ENCODE measurements at regions of chr21 and their contacts with region 1.

Region 1: DNA sequence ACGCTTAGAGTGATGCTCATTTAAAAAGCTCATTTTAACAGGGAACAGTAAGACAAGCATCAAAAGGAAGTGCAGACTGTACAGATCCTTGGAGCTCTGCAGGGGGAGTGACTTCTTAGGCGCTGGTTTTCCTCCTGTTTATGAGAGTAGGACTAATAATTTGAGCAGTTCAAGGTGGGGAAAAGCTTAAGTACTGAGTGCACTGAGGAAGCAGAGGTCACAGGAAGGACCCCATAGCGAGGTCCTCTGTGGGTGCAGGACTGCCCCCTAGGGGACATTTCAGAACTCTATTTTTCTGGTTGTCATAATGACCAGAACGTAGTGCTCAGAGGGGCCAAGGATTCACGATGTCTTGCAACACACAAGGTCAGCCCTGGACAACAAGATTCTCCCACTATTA is 112.1 kb downstream of the HLCS start:
- DNase-seq: peak in 3 of 9 experiments; percentile 14 to 50 (median 38)
- ATAC-seq: no peak
- H3K4me3 ChIP-seq: no peak overlapping the region
- H3K4me3 Mint-ChIP-seq: no peak overlapping the region
- H3K27ac ChIP-seq: no peak overlapping the region
- H3K27ac Mint-ChIP-seq: no peak overlapping the region
- H3K4me1 ChIP-seq: no peaks in the 10 kb centered on the region
- H3K4me1 Mint-ChIP-seq: peaks cover 2% of the 10 kb centered on the region
- H3K27me3 ChIP-seq: no peaks in the 10 kb centered on the region
- H3K27me3 Mint-ChIP-seq: no peaks in the 10 kb centered on the region
- CTCF ChIP-seq: peak; percentile 46

Region 2: DNA sequence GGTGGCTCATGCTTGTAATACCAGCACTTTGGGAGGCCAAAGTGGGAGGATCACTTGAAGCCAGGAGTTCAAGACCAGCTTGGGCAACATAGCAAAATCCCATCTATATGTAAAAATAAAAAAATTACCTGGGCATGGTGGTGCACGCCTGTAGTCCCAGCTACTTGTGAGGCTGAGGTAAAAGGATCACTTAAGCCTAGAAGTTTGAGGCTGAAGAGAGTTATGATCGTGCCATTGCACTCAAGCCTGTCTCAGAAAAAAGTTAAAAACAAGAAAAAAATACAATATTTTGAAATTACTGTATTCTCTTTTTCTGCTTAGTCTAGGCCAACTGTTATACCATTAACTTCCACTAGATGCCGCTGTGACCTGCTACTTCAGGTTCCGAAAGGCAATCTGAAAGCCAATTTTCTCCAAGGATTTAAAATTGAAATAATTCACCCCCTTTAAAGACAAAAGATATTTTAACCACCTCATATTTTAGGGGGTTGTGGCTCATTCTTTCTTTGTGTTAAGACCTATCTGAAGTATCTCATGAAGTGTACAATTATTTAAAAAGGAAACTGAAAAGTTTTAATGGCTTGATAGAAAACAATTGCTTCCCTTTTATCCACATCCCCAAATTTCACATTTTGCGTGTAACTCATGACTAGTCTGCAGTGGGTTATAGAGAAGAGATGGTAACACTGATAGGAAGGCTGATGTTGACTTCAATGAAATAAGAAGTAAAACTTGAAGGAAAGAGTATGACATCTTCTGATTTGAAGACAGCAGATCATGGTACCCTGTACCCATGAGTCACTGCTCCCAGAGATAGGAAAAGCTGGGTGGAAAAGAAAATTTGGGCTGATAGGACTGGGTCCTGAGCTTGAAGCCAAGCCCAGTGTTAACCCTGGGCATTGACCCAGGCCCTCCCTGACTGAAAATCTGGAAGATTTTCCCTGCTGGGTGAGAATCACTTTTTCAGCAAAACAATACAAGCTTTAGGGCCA is 350.0 kb before region 1 on chr21:
- CTCF ChIA-PET with region 1: interaction called, 6 read pairs
- POLR2A ChIA-PET with region 1: no interaction called
- intact Hi-C with region 1: loop called in 1 of 2 experiments (anchors 1 kb)
- DNase-seq: peak in 6 of 9 experiments; percentile 15 to 67 (median 50)
- ATAC-seq: no peak
- H3K4me3 ChIP-seq: no peak overlapping the region
- H3K4me3 Mint-ChIP-seq: no peak overlapping the region
- H3K27ac ChIP-seq: no peak overlapping the region
- H3K27ac Mint-ChIP-seq: no peak overlapping the region
- H3K4me1 ChIP-seq: no peaks in the 10 kb centered on the region
- H3K4me1 Mint-ChIP-seq: no peaks in the 10 kb centered on the region
- H3K27me3 ChIP-seq: no peaks in the 10 kb centered on the region
- H3K27me3 Mint-ChIP-seq: peaks cover 2% of the 10 kb centered on the region
- CTCF ChIP-seq: peak; percentile 97

Region 3: GRCh38 chr21:36589355-36589971 is 264.9 kb before region 1 on chr21:
- CTCF ChIA-PET with region 1: interaction called, 5 read pairs
- POLR2A ChIA-PET with region 1: no interaction called
- intact Hi-C with region 1: loop called in 1 of 2 experiments (anchors 10 kb)
- DNase-seq: peak in 4 of 9 experiments; percentile 7 to 27 (median 12)
- ATAC-seq: no peak
- H3K4me3 ChIP-seq: no peak overlapping the region
- H3K4me3 Mint-ChIP-seq: no peak overlapping the region
- H3K27ac ChIP-seq: no peak overlapping the region
- H3K27ac Mint-ChIP-seq: no peak overlapping the region
- H3K4me1 ChIP-seq: no peaks in the 10 kb centered on the region
- H3K4me1 Mint-ChIP-seq: peaks cover 7% of the 10 kb centered on the region
- H3K27me3 ChIP-seq: no peaks in the 10 kb centered on the region
- H3K27me3 Mint-ChIP-seq: no peaks in the 10 kb centered on the region
- CTCF ChIP-seq: no peak

Measured in CD8-positive, alpha-beta T cell (primary cell).